GM12878 (cell line): ENCODE measurements at regions of chr15 and their contacts with region 1.

Region 1: DNA sequence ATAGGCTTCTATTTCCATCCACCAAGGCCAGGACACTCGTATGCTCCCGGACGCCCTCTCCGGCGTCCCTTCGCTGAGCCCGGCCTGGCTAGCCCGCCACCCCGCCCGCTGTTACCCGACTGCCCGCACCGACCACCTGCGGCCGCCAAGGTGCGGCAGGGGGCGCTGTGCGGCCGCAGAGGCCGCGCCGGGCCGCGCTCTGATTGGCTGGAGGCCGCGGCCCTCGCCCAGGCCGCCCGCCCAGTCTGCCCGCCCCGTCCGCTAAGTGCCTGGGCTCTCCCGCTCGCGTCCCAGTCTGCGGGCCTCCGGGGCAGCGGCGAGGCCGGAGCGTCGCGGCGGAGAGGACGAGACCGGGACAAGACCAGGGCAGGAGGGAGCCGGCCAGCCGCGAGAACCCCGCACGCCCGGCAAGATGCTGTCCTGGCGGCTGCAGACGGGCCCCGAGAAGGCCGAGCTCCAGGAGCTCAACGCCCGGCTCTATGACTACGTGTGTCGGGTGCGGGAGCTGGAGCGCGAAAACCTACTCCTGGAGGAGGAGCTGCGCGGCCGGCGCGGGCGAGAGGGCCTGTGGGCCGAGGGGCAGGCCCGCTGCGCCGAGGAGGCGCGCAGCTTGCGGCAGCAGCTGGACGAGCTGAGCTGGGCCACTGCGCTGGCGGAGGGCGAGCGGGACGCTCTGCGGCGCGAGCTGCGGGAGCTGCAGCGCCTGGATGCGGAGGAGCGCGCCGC is at the start of gene SYNM:
- DNase-seq: no peak
- ATAC-seq: peak; percentile 85
- H3K4me3 ChIP-seq: peak within 1 kb of the TSS; percentile 65
- H3K27ac ChIP-seq: no peak within 1 kb of the TSS
- H3K4me1 ChIP-seq: peaks cover 14% of the 10 kb centered on the region
- H3K27me3 ChIP-seq: peaks cover 0 to 10% of the 10 kb centered on the region in 2 experiments; a peak in 1 of 4 replicates
- CTCF ChIP-seq: peak; percentile 56 to 68 (median 67); a peak in 5 of 6 replicates
- EP300 ChIP-seq: no peak
- POLR2A ChIP-seq: peak; percentile 48; the same call in 1 of the 2 replicates
- RAD21 ChIP-seq: peak; percentile 68
- polyA plus RNA-seq, gene SYNM: 0.14 to 0.31 TPM

Region 2: GRCh38 chr15:99090011-99090699 is 14.8 kb before region 1 on chr15:
- CTCF ChIA-PET with region 1: interaction called, 31 read pairs
- POLR2A ChIA-PET with region 1: interaction called, 3 read pairs
- RAD21 ChIA-PET with region 1: interaction called, 7 read pairs
- SMC1A ChIA-PET with region 1: interaction called, 16 read pairs
- in situ Hi-C with region 1: no loop called
- intact Hi-C with region 1: no loop called
- DNase-seq: peak; percentile 90
- ATAC-seq: peak; percentile 100
- H3K4me3 ChIP-seq: peak overlapping the region; percentile 9; the same call in 1 of the 2 replicates
- H3K27ac ChIP-seq: peak overlapping the region; percentile 70
- H3K4me1 ChIP-seq: peaks cover 18% of the 10 kb centered on the region
- H3K27me3 ChIP-seq: no peaks in the 10 kb centered on the region
- CTCF ChIP-seq: no peak
- EP300 ChIP-seq: peak; percentile 74 to 83; a peak in 3 of 4 replicates
- POLR2A ChIP-seq: no peak
- RAD21 ChIP-seq: no peak

Region 3: GRCh38 chr15:99213187-99213811 is 108.3 kb after region 1 on chr15:
- CTCF ChIA-PET with region 1: interaction called, 111 read pairs
- POLR2A ChIA-PET with region 1: interaction called, 3 read pairs
- RAD21 ChIA-PET with region 1: interaction called, 12 read pairs
- SMC1A ChIA-PET with region 1: interaction called, 45 read pairs
- in situ Hi-C with region 1: no loop called
- intact Hi-C with region 1: loop called (anchors 1 kb)
- DNase-seq: peak; percentile 4
- ATAC-seq: peak; percentile 93
- H3K4me3 ChIP-seq: no peak overlapping the region
- H3K27ac ChIP-seq: no peak overlapping the region
- H3K4me1 ChIP-seq: no peaks in the 10 kb centered on the region
- H3K27me3 ChIP-seq: no peaks in the 10 kb centered on the region
- CTCF ChIP-seq: peak; percentile 83 to 92 (median 85)
- EP300 ChIP-seq: no peak
- POLR2A ChIP-seq: no peak
- RAD21 ChIP-seq: peak; percentile 94

Region 4: DNA sequence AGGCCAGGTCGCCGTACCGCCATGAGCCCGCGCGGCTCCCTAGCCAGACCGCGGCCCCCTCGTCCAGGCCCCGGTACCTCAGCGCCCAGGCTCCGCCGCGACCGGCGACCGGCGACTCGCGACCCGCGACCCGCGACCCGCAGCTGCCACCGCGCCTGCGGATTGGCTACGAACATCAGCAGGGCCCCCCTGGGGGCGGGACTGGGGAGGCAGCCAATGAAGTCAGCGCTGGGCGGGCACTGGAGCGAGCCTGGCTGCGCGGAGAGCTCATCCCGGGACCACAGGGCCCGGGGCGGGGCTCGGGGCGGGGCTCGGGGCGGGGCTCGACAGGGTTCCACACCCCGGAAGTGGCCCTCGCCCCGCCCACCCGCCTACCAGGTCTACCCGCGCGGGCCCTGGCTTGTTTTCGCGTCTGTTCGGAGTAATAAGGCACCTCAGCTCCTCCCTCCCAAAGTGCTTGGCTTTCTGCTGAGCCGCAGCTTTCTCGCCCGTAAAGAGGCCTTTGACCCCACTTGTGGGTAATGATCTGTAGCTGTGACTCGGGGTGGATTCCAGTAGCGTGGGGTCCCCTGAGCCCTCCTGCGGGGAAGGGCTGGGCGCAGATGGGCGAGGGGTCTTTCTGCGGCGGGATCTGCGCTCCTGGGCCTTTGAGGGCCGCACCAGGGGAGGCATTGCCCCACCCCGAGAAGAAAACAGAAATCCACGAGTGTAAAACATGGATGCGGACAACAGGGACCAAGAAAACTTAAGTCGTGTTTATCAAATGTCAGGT is 628.5 kb after region 1 on chr15 and contains the start of gene LYSMD4:
- CTCF ChIA-PET with region 1: interaction called, 4 read pairs
- POLR2A ChIA-PET with region 1: no interaction called
- RAD21 ChIA-PET with region 1: interaction called, 4 read pairs
- SMC1A ChIA-PET with region 1: no interaction called
- in situ Hi-C with region 1: loop called (anchors 25 kb)
- intact Hi-C with region 1: no loop called
- DNase-seq: peak; percentile 58
- ATAC-seq: peak; percentile 100
- H3K4me3 ChIP-seq: peak within 1 kb of the TSS; percentile 84
- H3K27ac ChIP-seq: peak within 1 kb of the TSS; percentile 67
- H3K4me1 ChIP-seq: no peaks in the 10 kb centered on the region
- H3K27me3 ChIP-seq: no peaks in the 10 kb centered on the region
- CTCF ChIP-seq: no peak
- EP300 ChIP-seq: no peak
- POLR2A ChIP-seq: peak; percentile 83
- RAD21 ChIP-seq: no peak
- polyA plus RNA-seq, gene LYSMD4: 1.8 to 5.2 TPM

Region 5: GRCh38 chr15:99755692-99756409 is 650.9 kb after region 1 on chr15:
- CTCF ChIA-PET with region 1: interaction called, 6 read pairs
- POLR2A ChIA-PET with region 1: no interaction called
- RAD21 ChIA-PET with region 1: no interaction called
- SMC1A ChIA-PET with region 1: no interaction called
- in situ Hi-C with region 1: no loop called
- intact Hi-C with region 1: loop called (anchors 10 kb)
- DNase-seq: peak; percentile 43
- ATAC-seq: peak; percentile 99
- H3K4me3 ChIP-seq: no peak overlapping the region
- H3K27ac ChIP-seq: no peak overlapping the region
- H3K4me1 ChIP-seq: peaks cover 5% of the 10 kb centered on the region
- H3K27me3 ChIP-seq: no peaks in the 10 kb centered on the region
- CTCF ChIP-seq: peak; percentile 80 to 91 (median 88)
- EP300 ChIP-seq: no peak
- POLR2A ChIP-seq: no peak
- RAD21 ChIP-seq: peak; percentile 96